CD8-positive, alpha-beta T cell (primary cell): ENCODE measurements at regions of chr2 and their contacts with region 1.

Region 1: GRCh38 chr2:126527836-126528507 is 128.0 kb upstream of the GYPC start:
- DNase-seq: peak; percentile 49 to 83 (median 77)
- ATAC-seq: peak; percentile 73
- H3K4me3 ChIP-seq: no peak overlapping the region
- H3K4me3 Mint-ChIP-seq: no peak overlapping the region
- H3K27ac ChIP-seq: no peak overlapping the region
- H3K27ac Mint-ChIP-seq: no peak overlapping the region
- H3K4me1 ChIP-seq: no peaks in the 10 kb centered on the region
- H3K4me1 Mint-ChIP-seq: peaks cover 1% of the 10 kb centered on the region
- H3K27me3 ChIP-seq: no peaks in the 10 kb centered on the region
- H3K27me3 Mint-ChIP-seq: no peaks in the 10 kb centered on the region
- CTCF ChIP-seq: peak; percentile 78

Region 2: DNA sequence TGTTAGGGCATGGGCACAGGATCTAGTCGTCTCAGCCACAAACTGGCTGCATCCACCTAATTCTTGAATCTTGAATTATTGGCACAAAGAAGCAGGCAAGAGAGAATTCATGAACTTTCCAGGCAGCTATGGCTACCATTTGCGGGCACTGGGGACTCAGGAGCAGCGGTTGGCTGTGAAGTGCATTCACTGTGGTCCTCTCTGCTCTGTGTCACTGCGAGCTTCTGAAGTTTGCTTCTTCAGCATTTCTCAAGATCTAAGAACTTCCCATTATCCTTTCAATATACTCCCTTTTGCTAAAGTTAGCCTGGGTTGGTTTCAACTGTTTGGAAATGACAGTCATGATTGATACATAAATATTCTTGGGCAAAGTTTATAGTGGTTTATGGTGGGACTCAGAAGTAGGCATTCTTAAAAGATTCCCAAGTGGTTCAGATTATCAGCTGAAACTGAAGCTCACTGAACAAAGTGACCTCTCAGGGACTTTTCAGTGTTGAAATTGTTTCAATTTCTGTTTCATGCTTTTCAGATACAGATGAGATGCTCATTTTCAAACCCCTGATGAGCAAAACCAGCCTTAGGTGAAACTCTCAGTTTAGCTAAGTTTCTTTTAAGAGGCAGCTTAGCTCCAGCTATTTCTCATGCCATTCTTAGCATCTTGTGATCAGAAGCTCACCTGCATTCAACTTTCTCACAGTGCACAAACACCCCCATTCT is 1130.3 kb before region 1 on chr2:
- CTCF ChIA-PET with region 1: no interaction called
- POLR2A ChIA-PET with region 1: no interaction called
- intact Hi-C with region 1: no loop called
- DNase-seq: no peak
- ATAC-seq: no peak
- H3K4me3 ChIP-seq: no peak overlapping the region
- H3K4me3 Mint-ChIP-seq: no peak overlapping the region
- H3K27ac ChIP-seq: no peak overlapping the region
- H3K27ac Mint-ChIP-seq: no peak overlapping the region
- H3K4me1 ChIP-seq: no peaks in the 10 kb centered on the region
- H3K4me1 Mint-ChIP-seq: no peaks in the 10 kb centered on the region
- H3K27me3 ChIP-seq: no peaks in the 10 kb centered on the region
- H3K27me3 Mint-ChIP-seq: no peaks in the 10 kb centered on the region
- CTCF ChIP-seq: no peak

Region 3: GRCh38 chr2:126100962-126101361 is 427.0 kb before region 1 on chr2:
- CTCF ChIA-PET with region 1: no interaction called
- POLR2A ChIA-PET with region 1: no interaction called
- intact Hi-C with region 1: no loop called
- DNase-seq: no peak
- ATAC-seq: no peak
- H3K4me3 ChIP-seq: no peak overlapping the region
- H3K4me3 Mint-ChIP-seq: no peak overlapping the region
- H3K27ac ChIP-seq: no peak overlapping the region
- H3K27ac Mint-ChIP-seq: no peak overlapping the region
- H3K4me1 ChIP-seq: no peaks in the 10 kb centered on the region
- H3K4me1 Mint-ChIP-seq: no peaks in the 10 kb centered on the region
- H3K27me3 ChIP-seq: no peaks in the 10 kb centered on the region
- H3K27me3 Mint-ChIP-seq: no peaks in the 10 kb centered on the region
- CTCF ChIP-seq: no peak

Region 4: DNA sequence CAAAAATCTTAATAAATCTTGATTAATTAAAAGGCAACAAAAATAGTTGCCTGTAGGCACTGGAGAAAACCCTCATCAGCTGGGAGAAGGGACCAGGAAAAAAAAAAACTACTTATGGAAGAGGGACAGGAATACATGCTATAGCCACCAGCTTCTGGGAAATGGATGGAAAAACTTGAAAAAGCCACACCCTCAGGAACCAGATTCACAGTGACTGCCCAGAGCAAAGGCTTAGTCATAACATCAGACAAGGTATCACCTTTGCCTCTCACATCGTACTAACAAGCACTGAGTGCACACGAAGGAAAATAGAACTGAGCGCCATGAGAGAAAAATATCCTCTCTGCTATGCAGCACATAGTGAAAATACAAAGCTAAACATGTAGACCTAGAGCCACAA is 11.1 kb after region 1 on chr2:
- CTCF ChIA-PET with region 1: interaction called, 14 read pairs
- POLR2A ChIA-PET with region 1: no interaction called
- intact Hi-C with region 1: no loop called
- DNase-seq: no peak
- ATAC-seq: no peak
- H3K4me3 ChIP-seq: no peak overlapping the region
- H3K4me3 Mint-ChIP-seq: no peak overlapping the region
- H3K27ac ChIP-seq: no peak overlapping the region
- H3K27ac Mint-ChIP-seq: no peak overlapping the region
- H3K4me1 ChIP-seq: no peaks in the 10 kb centered on the region
- H3K4me1 Mint-ChIP-seq: peaks cover 6% of the 10 kb centered on the region
- H3K27me3 ChIP-seq: peaks cover 0 to 2% of the 10 kb centered on the region in 2 experiments
- H3K27me3 Mint-ChIP-seq: peaks cover 6% of the 10 kb centered on the region
- CTCF ChIP-seq: no peak

Region 5: DNA sequence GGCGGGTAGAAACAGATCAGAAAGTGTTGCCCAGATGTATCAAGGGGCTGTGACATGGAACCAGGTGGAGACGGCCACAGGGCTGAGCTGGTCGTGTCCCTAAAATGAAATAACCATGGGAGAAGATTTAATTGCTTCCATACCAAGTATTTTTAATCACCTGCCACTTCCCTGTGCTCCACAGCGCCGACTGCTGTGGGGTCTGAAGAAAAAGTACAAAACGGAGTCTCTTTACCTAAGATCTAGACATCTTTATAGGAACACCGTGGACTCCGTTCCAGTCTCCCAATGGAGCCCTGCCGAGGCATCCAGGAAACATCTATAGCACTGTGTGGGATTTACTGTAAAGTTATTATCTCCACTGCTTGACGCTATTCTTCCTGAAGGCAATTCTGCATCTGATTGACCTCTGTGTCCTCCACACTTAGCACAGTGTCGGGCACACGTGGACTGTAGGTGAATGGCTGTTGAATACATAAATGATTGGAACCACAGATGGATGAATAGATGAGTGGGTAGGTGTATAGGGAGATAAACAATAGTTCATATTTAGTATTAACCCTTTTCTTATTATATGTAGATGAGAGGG is 106.4 kb after region 1 on chr2:
- CTCF ChIA-PET with region 1: interaction called, 16 read pairs
- POLR2A ChIA-PET with region 1: no interaction called
- intact Hi-C with region 1: loop called in 1 of 2 experiments (anchors 2 kb)
- DNase-seq: peak in 7 of 9 experiments; percentile 14 to 67 (median 41)
- ATAC-seq: peak; percentile 48
- H3K4me3 ChIP-seq: no peak overlapping the region
- H3K4me3 Mint-ChIP-seq: no peak overlapping the region
- H3K27ac ChIP-seq: no peak overlapping the region
- H3K27ac Mint-ChIP-seq: no peak overlapping the region
- H3K4me1 ChIP-seq: no peaks in the 10 kb centered on the region
- H3K4me1 Mint-ChIP-seq: peaks cover 5% of the 10 kb centered on the region
- H3K27me3 ChIP-seq: no peaks in the 10 kb centered on the region
- H3K27me3 Mint-ChIP-seq: no peaks in the 10 kb centered on the region
- CTCF ChIP-seq: peak; percentile 51

Region 6: DNA sequence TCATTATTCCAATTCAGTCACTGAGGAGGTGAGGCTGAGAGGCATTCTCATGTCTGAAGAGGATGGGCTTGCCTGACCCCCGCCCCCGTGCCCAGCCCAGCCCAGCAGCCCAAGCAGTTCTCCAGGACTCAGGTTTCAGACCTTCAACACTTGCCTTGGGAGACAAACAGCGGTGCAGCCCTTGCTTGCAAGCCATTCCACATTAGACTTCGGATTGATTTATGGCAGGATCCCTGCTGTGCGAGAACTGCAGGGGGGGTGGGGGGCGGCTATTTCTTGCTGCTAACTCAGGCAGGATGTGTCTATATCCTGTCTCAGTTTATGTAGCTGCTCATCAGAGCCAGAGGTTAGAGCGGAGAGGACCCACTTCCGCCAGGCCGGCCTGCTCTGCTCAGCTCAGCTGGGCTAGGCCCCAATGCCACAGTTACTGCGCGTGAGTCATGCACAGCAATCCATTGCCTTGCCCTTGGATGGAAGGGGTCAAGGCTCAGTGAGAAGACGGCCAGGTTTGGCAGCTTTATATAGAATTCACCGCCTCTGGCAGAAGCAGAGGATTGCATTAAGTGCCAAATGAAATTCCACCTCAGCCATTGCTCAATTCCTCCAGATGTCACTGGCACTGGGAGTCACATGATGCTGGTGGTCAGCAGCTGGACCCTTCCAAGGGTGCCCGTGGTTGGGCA is 129.8 kb after region 1 on chr2:
- CTCF ChIA-PET with region 1: interaction called, 32 read pairs
- POLR2A ChIA-PET with region 1: no interaction called
- intact Hi-C with region 1: loop called in 1 of 2 experiments (anchors 2 kb)
- DNase-seq: peak; percentile 49 to 89 (median 79)
- ATAC-seq: peak; percentile 62
- H3K4me3 ChIP-seq: peak overlapping the region; percentile 80 to 96
- H3K4me3 Mint-ChIP-seq: peak overlapping the region; percentile 94
- H3K27ac ChIP-seq: peak overlapping the region; percentile 87 to 89
- H3K27ac Mint-ChIP-seq: peak overlapping the region; percentile 98
- H3K4me1 ChIP-seq: peaks cover 59% of the 10 kb centered on the region
- H3K4me1 Mint-ChIP-seq: peaks cover 75% of the 10 kb centered on the region
- H3K27me3 ChIP-seq: no peaks in the 10 kb centered on the region
- H3K27me3 Mint-ChIP-seq: no peaks in the 10 kb centered on the region
- CTCF ChIP-seq: no peak

Region 7: DNA sequence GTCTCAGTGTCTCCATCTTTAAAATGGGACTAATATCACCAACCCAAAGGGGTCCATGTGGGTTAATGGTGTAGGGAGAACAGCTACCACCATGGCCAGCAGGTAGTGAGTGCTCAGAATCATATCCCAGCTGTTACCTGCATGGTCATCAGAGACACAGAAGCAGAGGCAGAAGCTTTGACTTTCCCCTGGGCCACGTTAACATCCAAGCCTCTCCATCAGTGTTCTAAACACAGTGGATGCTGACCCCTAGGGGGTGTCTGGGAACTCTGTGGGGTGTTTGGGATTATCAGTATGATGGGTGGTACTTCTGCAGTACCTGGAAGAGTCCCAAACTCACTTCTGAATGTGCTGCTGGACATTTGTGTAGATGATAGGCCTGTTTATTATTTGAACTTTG is 221.6 kb after region 1 on chr2:
- CTCF ChIA-PET with region 1: interaction called, 25 read pairs
- POLR2A ChIA-PET with region 1: no interaction called
- intact Hi-C with region 1: loop called in 1 of 2 experiments (anchors 1 kb)
- DNase-seq: peak in 4 of 9 experiments; percentile 16 to 44 (median 21)
- ATAC-seq: no peak
- H3K4me3 ChIP-seq: no peak overlapping the region
- H3K4me3 Mint-ChIP-seq: no peak overlapping the region
- H3K27ac ChIP-seq: no peak overlapping the region
- H3K27ac Mint-ChIP-seq: no peak overlapping the region
- H3K4me1 ChIP-seq: peaks cover 7% of the 10 kb centered on the region
- H3K4me1 Mint-ChIP-seq: peaks cover 20% of the 10 kb centered on the region
- H3K27me3 ChIP-seq: no peaks in the 10 kb centered on the region
- H3K27me3 Mint-ChIP-seq: no peaks in the 10 kb centered on the region
- CTCF ChIP-seq: no peak

Region 8: DNA sequence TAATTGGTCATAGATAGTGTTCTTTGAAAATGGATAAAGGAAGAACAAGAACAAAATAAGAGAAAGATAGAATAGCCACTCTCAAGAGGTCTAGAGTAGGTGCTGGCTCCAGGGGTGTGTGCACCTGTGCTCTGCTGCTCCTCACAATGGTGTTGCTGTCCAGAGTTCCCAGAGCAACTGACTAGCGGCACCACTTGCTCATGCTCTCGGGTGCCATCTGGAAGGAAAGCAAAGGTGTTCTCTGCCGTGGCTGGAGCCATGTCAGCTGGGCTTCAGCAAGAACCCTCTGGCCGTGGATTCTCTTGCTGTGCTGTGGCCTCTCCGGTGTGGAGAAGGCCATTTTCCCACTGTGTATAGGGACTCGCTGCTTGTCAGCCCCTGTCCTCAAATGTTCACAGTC is 256.1 kb after region 1 on chr2:
- CTCF ChIA-PET with region 1: interaction called, 198 read pairs
- POLR2A ChIA-PET with region 1: no interaction called
- intact Hi-C with region 1: no loop called
- DNase-seq: no peak
- ATAC-seq: no peak
- H3K4me3 ChIP-seq: no peak overlapping the region
- H3K4me3 Mint-ChIP-seq: no peak overlapping the region
- H3K27ac ChIP-seq: no peak overlapping the region
- H3K27ac Mint-ChIP-seq: no peak overlapping the region
- H3K4me1 ChIP-seq: no peaks in the 10 kb centered on the region
- H3K4me1 Mint-ChIP-seq: no peaks in the 10 kb centered on the region
- H3K27me3 ChIP-seq: no peaks in the 10 kb centered on the region
- H3K27me3 Mint-ChIP-seq: peaks cover 14% of the 10 kb centered on the region
- CTCF ChIP-seq: no peak